Activated T-helper 1 cell treated with anti-CD3 and anti-CD28 coated beads, Interleukin-12 subunit alpha, Interleukin-12 subunit beta, Interleukin-2, Interleukin-4 antibody, amounts not matched to agents 30 ng/mL and 10 ng/mL and 1 ng/mL, durations not matched to agents 14 hours and 24 hours and 36 hours (primary cell): ENCODE measurements at regions of chr11 and their contacts with region 1.

Region 1: GRCh38 chr11:119030329-119031049 is at the start of gene SLC37A4:
- DNase-seq: peak; percentile 99
- H3K4me3 Mint-ChIP-seq: peak within 1 kb of the TSS; percentile 80
- H3K27ac Mint-ChIP-seq: peak within 1 kb of the TSS; percentile 86
- H3K4me1 Mint-ChIP-seq: peaks cover 15% of the 10 kb centered on the region
- H3K27me3 Mint-ChIP-seq: no peaks in the 10 kb centered on the region
- total RNA-seq, gene SLC37A4: 24.3 and 28.7 TPM in 2 replicates

Region 2: DNA sequence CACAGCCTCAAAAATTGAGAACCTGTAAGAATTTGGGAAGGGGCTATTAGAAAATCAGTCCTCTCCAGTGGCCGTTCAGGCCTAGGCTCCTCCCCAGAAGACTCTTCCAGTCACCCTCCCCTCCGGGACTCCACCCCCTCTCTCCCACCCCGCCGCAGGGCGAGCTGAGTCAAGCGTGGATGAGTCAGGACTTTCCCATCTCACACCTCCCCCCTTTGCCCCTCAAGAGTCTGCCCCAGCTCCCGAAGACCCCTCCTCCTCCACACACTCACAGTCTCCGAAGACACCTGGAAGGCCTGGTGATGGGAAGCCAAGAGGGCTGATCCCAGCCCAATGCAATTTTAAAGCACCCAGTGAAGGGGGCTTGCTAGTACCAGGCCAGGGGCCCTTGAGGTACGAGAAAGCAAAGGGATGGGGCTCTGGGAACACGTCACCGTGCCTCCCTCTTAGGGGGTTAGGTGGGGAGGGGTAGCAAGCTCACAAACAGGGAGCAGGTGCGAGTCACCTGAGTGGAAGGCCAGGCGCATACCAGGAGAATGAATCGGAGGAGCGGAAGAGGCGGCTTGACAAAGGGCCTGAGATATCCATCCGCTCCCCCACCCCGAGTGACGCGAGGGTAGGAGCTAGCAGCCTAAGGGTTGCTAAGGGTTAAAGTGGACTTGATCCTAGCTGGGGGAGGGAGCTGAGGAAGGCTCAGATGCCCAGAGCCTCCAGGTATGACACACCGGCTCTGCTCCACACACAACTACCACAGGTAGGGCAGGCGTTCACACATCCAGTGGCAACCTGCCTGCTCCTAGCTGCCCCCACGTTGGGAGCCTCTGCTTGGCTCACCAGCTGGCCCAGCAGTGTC is 118.4 kb before region 1 on chr11:
- intact Hi-C with region 1: no loop called
- DNase-seq: peak; percentile 55
- H3K4me3 Mint-ChIP-seq: peak overlapping the region; percentile 70
- H3K27ac Mint-ChIP-seq: peak overlapping the region; percentile 91
- H3K4me1 Mint-ChIP-seq: peaks cover 67% of the 10 kb centered on the region
- H3K27me3 Mint-ChIP-seq: no peaks in the 10 kb centered on the region

Region 3: GRCh38 chr11:118997627-118998387 is 32.7 kb before region 1 on chr11 and contains the start of gene CENATAC:
- intact Hi-C with region 1: loop called (anchors 1 kb)
- DNase-seq: peak; percentile 96
- H3K4me3 Mint-ChIP-seq: peak within 1 kb of the TSS; percentile 96
- H3K27ac Mint-ChIP-seq: peak within 1 kb of the TSS; percentile 97
- H3K4me1 Mint-ChIP-seq: peaks cover 27% of the 10 kb centered on the region
- H3K27me3 Mint-ChIP-seq: no peaks in the 10 kb centered on the region
- total RNA-seq, gene CENATAC: 50.1 and 53.6 TPM in 2 replicates

Region 4: GRCh38 chr11:119018074-119018938 is 12.2 kb before region 1 on chr11 and contains the starts of genes RPS25 and TRAPPC4:
- intact Hi-C with region 1: loop called (anchors 1 kb)
- DNase-seq: peak; percentile 92
- H3K4me3 Mint-ChIP-seq: peak within 1 kb of the TSS; percentile 99
- H3K27ac Mint-ChIP-seq: peak within 1 kb of the TSS; percentile 100
- H3K4me1 Mint-ChIP-seq: peaks cover 42% of the 10 kb centered on the region
- H3K27me3 Mint-ChIP-seq: no peaks in the 10 kb centered on the region
- total RNA-seq, gene RPS25: 1,440 and 1,455 TPM in 2 replicates
- total RNA-seq, gene TRAPPC4: 141 and 142 TPM in 2 replicates

Region 5: DNA sequence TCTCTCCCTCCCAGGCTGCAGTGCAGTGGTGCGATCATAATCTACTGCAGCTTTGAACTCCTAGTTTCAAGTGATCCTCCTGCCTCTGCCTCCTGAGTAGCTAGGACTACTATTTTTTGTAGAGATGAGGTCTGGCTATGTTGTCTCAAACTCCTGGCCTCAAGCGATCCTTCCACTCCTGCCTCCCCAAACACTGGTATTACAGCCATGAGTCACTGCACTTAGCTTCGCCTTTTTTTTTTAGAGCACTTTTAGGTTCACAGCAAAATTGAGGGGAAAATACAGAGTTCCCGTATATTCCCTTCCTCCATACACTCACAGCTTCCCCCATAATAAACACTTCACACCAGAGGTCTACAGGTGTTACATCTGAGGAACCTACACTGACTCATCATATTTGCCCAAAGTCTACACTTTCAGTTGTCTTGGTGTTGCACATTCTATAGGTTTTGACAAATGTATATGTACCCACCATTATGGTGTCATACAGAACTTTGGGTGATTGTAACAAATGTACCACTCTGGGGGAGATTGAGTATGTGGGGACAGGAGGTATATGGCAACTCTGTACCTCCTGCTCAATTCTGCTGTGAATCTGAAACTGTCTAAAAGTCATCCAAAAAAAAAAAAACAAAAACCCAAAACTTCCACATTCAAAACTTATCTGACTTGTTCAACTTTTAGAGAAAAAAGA is 11.5 kb after region 1 on chr11:
- intact Hi-C with region 1: loop called (anchors 1 kb)
- DNase-seq: no peak
- H3K4me3 Mint-ChIP-seq: no peak overlapping the region
- H3K27ac Mint-ChIP-seq: peak overlapping the region; percentile 56
- H3K4me1 Mint-ChIP-seq: peaks cover 8% of the 10 kb centered on the region
- H3K27me3 Mint-ChIP-seq: no peaks in the 10 kb centered on the region

Region 6: GRCh38 chr11:119084663-119085436 is 54.4 kb after region 1 on chr11 and contains the start of gene HMBS:
- intact Hi-C with region 1: loop called (anchors 1 kb)
- DNase-seq: peak; percentile 89
- H3K4me3 Mint-ChIP-seq: peak within 1 kb of the TSS; percentile 97
- H3K27ac Mint-ChIP-seq: peak within 1 kb of the TSS; percentile 92
- H3K4me1 Mint-ChIP-seq: peaks cover 39% of the 10 kb centered on the region
- H3K27me3 Mint-ChIP-seq: no peaks in the 10 kb centered on the region
- total RNA-seq, gene HMBS: 55.0 and 55.6 TPM in 2 replicates